GM10248 (cell line): ENCODE measurements at regions of chr6 and their contacts with region 1.

Region 1: DNA sequence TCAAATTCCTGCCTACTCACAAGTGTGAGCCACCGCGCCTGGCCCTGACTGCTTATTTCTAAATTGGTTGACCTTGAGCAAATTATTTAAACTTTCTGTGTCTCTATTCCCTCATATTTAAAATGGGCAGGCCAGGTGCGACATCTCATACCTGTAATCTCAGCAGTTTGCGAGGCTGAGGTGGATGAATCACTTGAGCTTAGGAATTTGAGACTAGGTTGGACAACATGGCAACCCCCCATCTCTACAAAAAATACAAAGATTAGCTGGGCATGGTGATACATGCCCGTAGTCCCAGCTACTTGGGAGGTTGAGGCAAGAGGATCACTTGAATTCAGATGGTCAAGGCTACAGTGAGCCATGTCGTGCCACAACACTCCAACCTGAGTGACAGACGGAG is 26.5 kb downstream of the DCBLD1 start:
- DNase-seq: no peak
- CTCF ChIP-seq: no peak

Region 2: DNA sequence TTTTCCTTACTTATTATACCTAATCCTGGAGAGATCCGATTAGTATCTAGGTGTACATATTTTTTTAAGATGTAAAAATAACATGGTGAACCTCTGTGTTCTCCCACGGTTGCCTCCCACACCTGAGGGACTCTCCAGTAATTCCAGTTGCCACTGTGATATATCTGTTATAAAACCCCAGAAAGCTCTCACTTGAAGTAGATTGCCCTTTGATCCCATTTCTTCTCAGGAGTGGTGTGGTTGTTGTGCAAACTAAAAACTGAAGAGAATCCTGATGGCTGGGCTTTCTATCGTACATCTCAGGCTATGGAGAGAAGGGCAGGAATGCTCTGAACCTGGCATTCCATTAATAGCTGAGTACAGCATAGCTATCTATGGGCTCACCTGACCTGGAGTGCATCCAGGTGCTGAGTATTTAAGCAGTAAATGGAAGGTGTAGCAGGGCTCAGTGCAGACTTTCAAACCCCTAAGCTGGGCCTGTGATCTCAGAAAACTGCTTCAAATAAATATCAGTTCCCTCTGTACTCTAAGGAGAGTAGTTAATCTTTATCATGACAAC is 202.7 kb before region 1 on chr6:
- CTCF ChIA-PET with region 1: no interaction called
- POLR2A ChIA-PET with region 1: no interaction called
- DNase-seq: no peak
- CTCF ChIP-seq: no peak

Region 3: GRCh38 chr6:117425431-117426153 is 83.4 kb before region 1 on chr6 and contains the start of gene ROS1:
- CTCF ChIA-PET with region 1: no interaction called
- POLR2A ChIA-PET with region 1: no interaction called
- DNase-seq: no peak
- CTCF ChIP-seq: no peak

Region 4: DNA sequence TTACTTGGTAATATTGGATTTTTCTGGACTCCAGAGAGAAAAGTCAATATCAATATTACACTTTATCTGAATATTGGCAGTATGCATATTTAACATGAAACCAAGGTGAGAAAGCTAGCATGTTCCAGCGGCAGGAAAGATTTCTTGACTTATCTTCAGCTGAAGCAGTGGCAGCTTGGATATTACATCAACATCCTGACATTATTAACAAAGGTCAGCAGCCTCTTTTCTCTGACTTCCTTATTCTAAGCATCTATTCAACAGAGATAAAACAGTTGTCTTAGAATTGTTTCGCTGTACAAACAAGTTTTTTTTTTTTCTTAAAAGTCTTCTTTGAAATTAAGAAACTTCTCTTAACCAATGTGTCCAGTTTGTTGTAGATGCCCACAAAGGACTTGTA is 14.7 kb before region 1 on chr6:
- CTCF ChIA-PET with region 1: interaction called, 14 read pairs
- POLR2A ChIA-PET with region 1: no interaction called
- DNase-seq: no peak
- CTCF ChIP-seq: no peak

Region 5: GRCh38 chr6:117545161-117545595 is 36.2 kb after region 1 on chr6:
- CTCF ChIA-PET with region 1: no interaction called
- POLR2A ChIA-PET with region 1: no interaction called
- DNase-seq: no peak
- CTCF ChIP-seq: no peak